T-cell (primary cell): ENCODE measurements at regions of chr10 and their contacts with region 1.

Region 1: DNA sequence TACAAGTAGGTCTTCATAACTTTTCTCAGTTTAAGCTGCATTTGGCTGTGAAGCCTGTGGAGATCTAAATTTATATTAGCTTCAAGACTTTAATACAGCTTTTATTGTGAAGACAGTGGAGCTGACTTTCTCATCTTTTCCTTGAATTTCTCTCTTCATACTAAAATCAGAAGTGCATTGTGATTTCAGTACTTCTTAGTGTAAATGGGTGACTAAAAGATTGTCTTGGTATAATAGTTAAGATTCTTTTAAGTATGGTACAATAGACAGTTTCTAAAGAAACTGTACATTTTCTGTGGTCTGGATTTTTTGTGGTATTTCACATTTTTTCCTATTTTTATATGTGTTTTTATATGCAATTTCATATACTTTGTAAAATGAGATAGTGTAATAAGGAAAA is 21.0 kb upstream of the DDX21 start:
- DNase-seq: no peak
- ATAC-seq: no peak
- H3K4me3 ChIP-seq: no peak overlapping the region
- H3K4me3 Mint-ChIP-seq: no peak overlapping the region
- H3K27ac ChIP-seq: no peak overlapping the region
- H3K27ac Mint-ChIP-seq: no peak overlapping the region
- H3K4me1 ChIP-seq: no peaks in the 10 kb centered on the region
- H3K4me1 Mint-ChIP-seq: peaks cover 7 to 22% (median 8%) of the 10 kb centered on the region in 3 donors
- H3K27me3 ChIP-seq: no peaks in the 10 kb centered on the region
- H3K27me3 Mint-ChIP-seq: no peaks in the 10 kb centered on the region

Region 2: DNA sequence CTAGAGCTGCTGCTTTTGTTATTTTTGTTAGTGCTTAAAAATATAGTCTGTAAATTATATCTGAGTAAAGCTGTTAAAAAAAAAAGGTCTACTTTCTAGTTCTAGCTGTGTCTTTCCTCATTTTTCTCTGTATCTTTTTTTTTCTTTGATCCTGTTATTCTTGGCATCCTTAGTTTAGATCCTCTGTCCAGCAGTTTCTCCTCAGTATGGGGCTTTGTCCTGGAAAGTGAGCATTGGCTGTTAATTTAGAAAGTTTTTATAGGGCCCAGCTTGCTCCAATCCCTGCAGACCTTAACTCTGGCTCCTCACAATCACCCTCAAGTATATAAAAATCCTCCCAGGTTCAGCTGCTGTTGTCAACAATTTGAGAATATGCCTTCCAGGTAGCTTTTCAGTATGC is 10.4 kb before region 1 on chr10:
- CTCF ChIA-PET with region 1: no interaction called
- POLR2A ChIA-PET with region 1: no interaction called
- DNase-seq: no peak
- ATAC-seq: no peak
- H3K4me3 ChIP-seq: no peak overlapping the region
- H3K4me3 Mint-ChIP-seq: no peak overlapping the region
- H3K27ac ChIP-seq: no peak overlapping the region
- H3K27ac Mint-ChIP-seq: peak overlapping the region in 1 of 2 donors; percentile 61
- H3K4me1 ChIP-seq: no peaks in the 10 kb centered on the region
- H3K4me1 Mint-ChIP-seq: peaks cover 5 to 15% (median 11%) of the 10 kb centered on the region in 3 donors
- H3K27me3 ChIP-seq: no peaks in the 10 kb centered on the region
- H3K27me3 Mint-ChIP-seq: no peaks in the 10 kb centered on the region

Region 3: GRCh38 chr10:68955832-68956532 is 21.0 kb after region 1 on chr10 and contains the start of gene DDX21:
- CTCF ChIA-PET with region 1: no interaction called
- POLR2A ChIA-PET with region 1: no interaction called
- DNase-seq: peak; percentile 69 to 94 (median 88)
- ATAC-seq: peak; percentile 89 to 92 (median 91)
- H3K4me3 ChIP-seq: peak within 1 kb of the TSS; percentile 83 to 93
- H3K4me3 Mint-ChIP-seq: peak within 1 kb of the TSS; percentile 95 to 99 (median 97)
- H3K27ac ChIP-seq: peak within 1 kb of the TSS; percentile 97
- H3K27ac Mint-ChIP-seq: peak within 1 kb of the TSS; percentile 95 to 99
- H3K4me1 ChIP-seq: peaks cover 21 to 35% of the 10 kb centered on the region in 2 experiments
- H3K4me1 Mint-ChIP-seq: peaks cover 28 to 40% (median 37%) of the 10 kb centered on the region in 3 donors
- H3K27me3 ChIP-seq: no peaks in the 10 kb centered on the region
- H3K27me3 Mint-ChIP-seq: no peaks in the 10 kb centered on the region
- total RNA-seq, gene DDX21: 53.7 to 86.0 (median 60.7) TPM

Region 4: GRCh38 chr10:68981074-68981473 is 46.1 kb after region 1 on chr10:
- CTCF ChIA-PET with region 1: interaction called in 1 of 2 experiments, 4 read pairs
- POLR2A ChIA-PET with region 1: interaction called in 1 of 2 experiments, 14 read pairs
- DNase-seq: peak in 1 of 35 experiments; percentile 12
- ATAC-seq: peak in 1 of 4 experiments; percentile 30
- H3K4me3 ChIP-seq: no peak overlapping the region
- H3K4me3 Mint-ChIP-seq: no peak overlapping the region
- H3K27ac ChIP-seq: no peak overlapping the region
- H3K27ac Mint-ChIP-seq: no peak overlapping the region
- H3K4me1 ChIP-seq: no peaks in the 10 kb centered on the region
- H3K4me1 Mint-ChIP-seq: no peaks in the 10 kb centered on the region
- H3K27me3 ChIP-seq: no peaks in the 10 kb centered on the region
- H3K27me3 Mint-ChIP-seq: no peaks in the 10 kb centered on the region

Region 5: DNA sequence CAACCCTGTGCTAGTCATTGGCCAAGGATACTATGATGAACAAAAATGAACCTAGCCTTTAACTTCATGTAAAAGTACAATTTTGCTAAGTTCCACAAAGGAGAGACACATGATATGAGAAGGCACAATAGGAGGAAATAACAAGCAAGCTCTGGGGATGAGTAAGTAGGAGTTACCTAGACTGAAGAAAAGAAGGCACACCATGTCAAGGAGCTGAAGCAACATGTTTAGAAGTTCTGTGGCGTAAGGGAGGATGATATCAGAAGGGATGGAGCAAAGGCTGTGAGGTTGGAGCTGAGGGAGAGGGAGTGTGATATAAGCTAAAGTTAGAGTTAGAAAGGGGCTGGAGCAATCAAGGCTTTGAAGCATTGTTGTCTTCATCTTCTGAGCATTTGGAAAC is 79.2 kb after region 1 on chr10:
- CTCF ChIA-PET with region 1: no interaction called
- POLR2A ChIA-PET with region 1: no interaction called
- DNase-seq: no peak
- ATAC-seq: no peak
- H3K4me3 ChIP-seq: no peak overlapping the region
- H3K4me3 Mint-ChIP-seq: no peak overlapping the region
- H3K27ac ChIP-seq: no peak overlapping the region
- H3K27ac Mint-ChIP-seq: no peak overlapping the region
- H3K4me1 ChIP-seq: no peaks in the 10 kb centered on the region
- H3K4me1 Mint-ChIP-seq: peaks cover 0 to 5% (median 0%) of the 10 kb centered on the region in 3 donors
- H3K27me3 ChIP-seq: no peaks in the 10 kb centered on the region
- H3K27me3 Mint-ChIP-seq: no peaks in the 10 kb centered on the region